GM10248 (cell line): ENCODE measurements at regions of chr7 and their contacts with region 1.

Region 1: DNA sequence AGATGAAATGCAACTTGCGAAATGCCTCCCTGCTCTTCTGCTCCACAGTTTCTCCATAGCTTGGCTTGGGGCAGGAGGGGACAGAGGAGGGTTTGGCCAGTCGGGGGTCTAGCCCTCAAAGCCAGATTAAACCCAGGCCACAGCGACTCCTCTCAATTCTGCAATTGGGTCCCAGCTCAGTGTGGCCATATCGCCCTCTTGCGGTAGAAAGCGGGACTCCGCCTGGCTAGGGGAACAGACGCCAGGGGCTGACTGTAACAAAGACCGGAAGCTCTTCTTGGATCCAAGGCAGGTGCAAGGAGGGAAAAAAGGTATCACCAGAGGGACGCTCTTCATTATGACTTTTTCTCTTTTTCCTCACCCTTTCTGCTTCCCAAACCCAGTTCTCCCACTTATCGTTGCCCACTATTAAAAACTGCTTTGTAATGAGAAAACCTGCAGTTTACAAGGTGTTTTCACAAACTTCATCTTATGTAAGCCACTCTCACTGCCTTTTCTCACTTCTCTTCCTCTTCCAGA is 36.6 kb upstream of the TNPO3 start:
- DNase-seq: peak; percentile 82
- CTCF ChIP-seq: peak; percentile 95

Region 2: DNA sequence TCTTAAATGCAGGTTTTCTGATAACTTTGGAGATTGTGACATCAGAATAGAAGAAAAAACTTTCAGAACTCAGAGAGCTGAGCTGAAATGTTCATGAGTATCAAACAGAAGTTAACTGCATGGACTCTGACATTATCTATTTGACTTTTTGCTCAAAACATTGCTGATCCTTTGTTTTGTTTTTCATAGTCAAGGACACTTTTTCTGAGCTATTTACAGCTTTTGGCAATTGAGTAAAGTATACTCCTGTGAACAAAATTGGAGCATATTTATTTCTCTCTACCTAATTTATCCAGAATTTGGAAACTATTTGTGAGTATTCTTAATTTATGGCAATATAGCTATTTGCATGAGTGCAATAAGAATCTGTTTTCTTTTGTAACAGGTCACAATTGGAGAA is 192.2 kb before region 1 on chr7:
- CTCF ChIA-PET with region 1: interaction called, 20 read pairs
- POLR2A ChIA-PET with region 1: no interaction called
- DNase-seq: no peak
- CTCF ChIP-seq: no peak

Region 3: DNA sequence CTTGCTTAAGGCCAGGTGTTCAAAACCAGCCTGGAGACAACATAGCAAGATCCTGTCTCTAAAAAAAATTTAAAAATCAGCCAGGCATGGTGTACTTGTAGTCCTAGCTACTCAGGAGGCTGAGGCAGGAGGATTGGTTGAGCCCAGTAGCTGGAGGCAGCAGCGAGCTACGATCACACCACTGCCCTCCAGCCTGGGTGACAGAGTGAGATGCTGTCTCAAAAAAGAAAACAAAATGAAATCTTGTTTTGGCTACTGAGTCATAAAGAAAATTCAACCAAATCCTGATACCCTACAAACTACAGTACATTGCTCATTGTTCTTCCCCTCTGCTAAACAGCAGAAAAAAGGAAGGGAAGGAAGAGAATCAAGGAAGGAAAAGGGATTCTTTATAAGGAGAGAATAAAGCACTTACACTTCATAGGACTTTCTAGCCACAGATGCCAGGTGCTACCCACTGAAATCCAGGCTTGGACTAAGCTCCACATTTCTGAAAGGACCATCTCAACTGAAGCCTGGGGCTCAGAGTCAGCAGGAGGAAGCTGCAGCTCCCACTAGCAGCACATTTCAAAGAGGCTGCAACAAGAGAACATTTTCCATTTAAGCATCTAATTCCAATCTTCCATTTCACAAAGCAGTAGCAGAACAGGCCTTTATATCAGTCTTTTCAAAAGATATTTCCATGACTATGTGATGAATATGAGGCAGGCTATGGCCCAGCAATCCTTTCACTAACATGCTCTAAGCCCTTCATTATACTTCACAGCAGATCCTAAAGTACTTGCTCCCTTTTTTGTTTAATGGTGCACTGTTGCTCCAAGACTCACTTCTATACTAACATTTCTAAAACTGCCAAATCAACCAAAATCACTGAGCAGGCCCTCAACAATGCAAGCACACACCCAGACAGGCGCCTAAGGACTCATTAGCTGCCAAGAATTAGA is 50.1 kb before region 1 on chr7:
- CTCF ChIA-PET with region 1: interaction called, 18 read pairs
- POLR2A ChIA-PET with region 1: no interaction called
- DNase-seq: no peak
- CTCF ChIP-seq: no peak

Region 4: DNA sequence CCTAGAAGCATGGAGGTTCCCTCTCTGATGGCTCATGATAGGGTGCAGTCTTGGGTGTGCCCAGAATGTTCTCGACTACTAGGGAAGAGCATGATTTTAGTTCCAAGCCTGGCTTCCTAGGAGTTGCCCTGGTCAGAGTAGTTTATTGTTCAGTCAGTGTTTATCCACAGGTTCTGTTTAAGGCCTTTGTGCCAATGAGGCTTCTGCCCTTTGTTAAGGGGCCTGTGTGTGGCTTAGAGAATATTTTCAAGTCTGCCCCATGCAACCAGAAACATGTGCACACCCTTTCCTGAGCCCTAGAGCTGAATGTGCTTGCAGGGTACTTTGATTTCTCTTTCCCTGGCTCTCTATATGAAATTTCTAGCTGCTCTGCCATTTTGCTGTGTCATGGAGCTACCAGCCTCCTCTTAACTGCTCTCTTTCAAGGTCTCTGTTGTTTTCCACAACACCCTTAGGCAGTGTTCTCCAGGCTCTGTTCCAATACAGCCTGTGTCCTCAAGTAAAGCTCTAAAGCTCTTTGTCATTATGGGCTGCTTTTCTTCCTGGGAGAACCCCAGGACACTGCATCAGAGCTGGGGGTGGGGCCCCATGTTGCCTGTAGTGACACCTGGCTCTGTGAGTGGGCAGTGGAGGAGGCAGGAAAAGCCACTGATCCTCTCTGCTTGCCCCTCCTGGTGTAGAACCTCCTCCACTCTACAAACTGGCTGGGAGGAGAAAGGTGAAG is 18.9 kb after region 1 on chr7:
- CTCF ChIA-PET with region 1: interaction called, 26 read pairs
- POLR2A ChIA-PET with region 1: no interaction called
- DNase-seq: no peak
- CTCF ChIP-seq: no peak

Region 5: DNA sequence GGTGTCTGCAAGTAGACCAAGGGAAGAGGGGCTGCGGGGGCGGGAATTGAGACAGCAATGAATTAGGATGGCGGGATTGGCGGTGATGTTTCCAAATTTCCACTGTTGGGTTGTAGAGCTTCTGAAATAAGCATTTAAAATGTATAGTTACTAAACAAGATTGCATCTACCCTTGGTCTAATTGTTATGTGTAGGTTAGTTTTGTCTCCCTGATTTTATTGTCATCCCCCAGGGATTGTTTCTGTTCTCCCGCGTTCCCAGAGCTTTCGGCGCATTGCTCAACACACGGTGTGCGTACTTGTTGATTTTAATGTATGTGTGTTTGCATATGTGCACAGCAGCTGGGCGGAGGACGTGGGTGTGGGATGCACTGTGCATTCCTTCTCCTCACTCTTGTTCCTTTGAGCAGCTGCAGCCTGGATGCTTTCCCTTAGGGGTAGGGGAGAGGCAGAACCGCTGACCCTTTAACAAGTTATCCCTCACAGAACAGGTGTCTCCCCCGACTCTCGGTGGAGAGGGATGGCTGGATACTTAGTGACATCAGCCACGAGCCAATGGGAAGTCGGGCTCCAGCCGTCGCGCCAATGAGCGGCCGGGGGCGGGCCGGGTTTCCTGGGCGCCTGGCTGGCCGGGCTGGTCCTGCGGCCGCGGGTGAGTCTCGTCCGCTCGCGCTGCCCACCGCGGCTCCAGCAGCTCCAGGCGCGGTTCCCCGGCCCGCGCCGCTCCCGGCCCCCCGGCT is 52.7 kb after region 1 on chr7 and contains the start of gene TSPAN33:
- CTCF ChIA-PET with region 1: interaction called, 10 read pairs
- POLR2A ChIA-PET with region 1: interaction called, 3 read pairs
- DNase-seq: peak; percentile 92
- CTCF ChIP-seq: no peak

Region 6: DNA sequence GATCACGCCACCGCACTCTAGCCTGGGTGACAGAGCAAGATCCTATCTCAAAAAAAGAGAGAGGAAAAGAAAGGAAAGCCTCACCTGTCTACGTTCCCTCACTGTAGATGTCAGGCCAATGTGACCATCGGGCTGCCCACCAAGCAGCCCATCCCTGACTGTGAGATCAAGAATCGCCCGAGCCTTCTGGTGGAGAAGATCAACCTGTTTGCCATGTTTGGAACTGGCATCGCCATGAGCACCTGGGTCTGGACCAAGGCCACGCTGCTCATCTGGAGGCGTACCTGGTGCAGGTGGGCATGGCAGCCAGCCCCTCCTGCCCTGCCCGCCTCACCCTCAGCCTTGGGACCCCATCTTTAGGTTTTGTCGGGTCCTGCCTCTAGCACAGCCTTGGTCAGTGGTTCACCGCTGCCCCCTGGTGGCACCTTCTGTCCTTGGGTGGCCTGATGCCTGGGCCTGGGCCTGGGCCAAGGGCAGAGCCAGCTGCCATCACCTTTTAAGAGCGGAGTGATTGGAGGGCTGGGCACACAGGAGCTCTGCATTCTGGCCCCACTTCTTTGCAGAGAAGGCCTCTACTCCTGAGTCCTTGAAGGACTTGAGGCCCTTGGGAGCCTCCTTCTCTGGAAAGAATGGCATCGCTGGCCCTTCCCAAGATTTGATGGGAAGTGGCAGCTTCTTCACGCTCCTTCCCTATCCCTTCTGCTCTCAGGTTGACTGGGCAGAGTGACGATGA is 118.9 kb after region 1 on chr7:
- CTCF ChIA-PET with region 1: interaction called, 10 read pairs
- POLR2A ChIA-PET with region 1: no interaction called
- DNase-seq: peak; percentile 88
- CTCF ChIP-seq: peak; percentile 96

Region 7: DNA sequence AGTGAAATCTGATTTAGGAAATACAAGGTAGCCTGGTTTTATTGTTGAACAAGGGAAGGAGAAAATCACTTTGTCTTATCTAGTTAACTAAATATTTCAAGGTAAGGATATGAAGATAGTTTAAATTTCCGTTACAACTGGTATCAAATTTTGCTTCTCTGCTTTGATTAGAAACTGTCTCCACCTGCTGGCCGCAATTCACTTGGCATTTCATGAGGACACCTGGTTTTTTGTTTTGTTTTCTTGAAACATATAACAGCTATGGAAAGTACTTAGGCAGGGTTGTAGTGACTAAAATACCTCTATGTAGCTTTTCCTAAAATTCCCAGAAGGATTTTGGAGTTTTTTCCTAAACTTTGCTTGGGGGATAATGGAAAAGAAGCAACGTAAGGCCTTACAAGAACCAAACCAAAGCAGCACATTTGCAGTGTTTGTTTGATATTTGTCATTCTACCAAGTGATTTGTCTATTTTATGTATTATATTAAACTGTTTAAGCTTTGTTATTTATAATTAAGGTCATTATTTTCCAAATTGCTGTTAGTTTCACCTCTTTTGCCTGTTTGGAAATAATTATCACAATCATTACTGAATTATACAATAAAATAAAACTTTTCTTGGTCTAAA is 206.8 kb after region 1 on chr7:
- CTCF ChIA-PET with region 1: no interaction called
- POLR2A ChIA-PET with region 1: no interaction called
- DNase-seq: peak; percentile 62
- CTCF ChIP-seq: peak; percentile 74